T-cell (primary cell): ENCODE measurements at regions of chr14 and their contacts with region 1.

Region 1: GRCh38 chr14:76918751-76919543 is 92.7 kb downstream of the LRRC74A start:
- DNase-seq: no peak
- ATAC-seq: no peak
- H3K4me3 ChIP-seq: no peak overlapping the region
- H3K4me3 Mint-ChIP-seq: peak overlapping the region in 1 of 3 donors; percentile 52
- H3K27ac ChIP-seq: no peak overlapping the region
- H3K27ac Mint-ChIP-seq: peak overlapping the region in 1 of 2 donors; percentile 11
- H3K4me1 ChIP-seq: peaks cover 15 to 57% of the 10 kb centered on the region in 2 experiments
- H3K4me1 Mint-ChIP-seq: peaks cover 43 to 56% (median 49%) of the 10 kb centered on the region in 3 donors
- H3K27me3 ChIP-seq: no peaks in the 10 kb centered on the region
- H3K27me3 Mint-ChIP-seq: no peaks in the 10 kb centered on the region

Region 2: DNA sequence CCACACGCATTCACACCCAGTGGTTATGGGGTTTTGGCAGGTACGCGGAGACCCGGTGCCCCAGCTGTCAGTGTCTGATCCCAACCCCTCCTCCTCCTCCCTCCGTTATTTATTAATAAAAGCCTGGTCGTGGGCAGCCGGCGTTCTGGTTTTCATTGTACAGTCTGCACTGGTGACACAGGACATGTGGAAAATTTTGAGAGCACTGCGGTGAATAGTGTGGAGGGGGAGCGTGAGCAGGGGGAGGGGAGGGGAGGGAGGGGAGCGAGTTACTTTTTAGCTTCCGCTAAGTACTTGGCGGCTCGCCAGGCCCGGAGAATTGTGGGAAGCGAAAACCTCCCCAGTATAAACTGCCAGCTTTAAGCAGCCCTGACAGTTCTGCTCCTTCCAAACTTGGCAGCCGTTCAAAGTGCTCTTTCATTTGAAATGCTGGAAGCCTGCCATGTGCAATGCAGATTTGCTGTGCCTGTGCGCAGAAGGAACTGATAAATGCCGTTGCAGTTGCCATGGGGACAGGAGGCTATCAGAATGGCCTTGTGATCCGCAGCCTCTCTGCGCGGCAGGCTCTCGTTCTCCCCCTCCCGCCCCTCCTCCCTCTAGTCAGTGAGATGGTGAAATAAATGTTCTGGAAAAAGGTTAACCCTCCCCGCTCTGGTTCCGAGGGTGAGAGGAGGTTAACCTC is 121.3 kb after region 1 on chr14:
- CTCF ChIA-PET with region 1: interaction called, 5 to 12 read pairs
- POLR2A ChIA-PET with region 1: no interaction called
- DNase-seq: peak; percentile 95 to 99 (median 98)
- ATAC-seq: peak; percentile 80 to 86 (median 82)
- H3K4me3 ChIP-seq: peak overlapping the region; percentile 39 to 44
- H3K4me3 Mint-ChIP-seq: peak overlapping the region; percentile 79 to 83 (median 81)
- H3K27ac ChIP-seq: peak overlapping the region; percentile 95
- H3K27ac Mint-ChIP-seq: peak overlapping the region; percentile 97 to 99
- H3K4me1 ChIP-seq: peaks cover 46 to 84% of the 10 kb centered on the region in 2 experiments
- H3K4me1 Mint-ChIP-seq: peaks cover 86 to 94% (median 86%) of the 10 kb centered on the region in 3 donors
- H3K27me3 ChIP-seq: no peaks in the 10 kb centered on the region
- H3K27me3 Mint-ChIP-seq: no peaks in the 10 kb centered on the region